ENCODE measurements at regions of chr3 and their contacts with region 1.

Region 1: GRCh38 chr3:113163152-113163551 is 48.2 kb upstream of the BOC start:
- DNase-seq: no peak
- H3K4me3 ChIP-seq: no peak overlapping the region
- H3K27ac ChIP-seq: no peak overlapping the region
- H3K4me1 ChIP-seq: peaks cover 0 to 14% of the 10 kb centered on the region in 2 donors
- H3K27me3 ChIP-seq: no peaks in the 10 kb centered on the region
- CTCF ChIP-seq: no peak
- POLR2A ChIP-seq: no peak

Region 2: DNA sequence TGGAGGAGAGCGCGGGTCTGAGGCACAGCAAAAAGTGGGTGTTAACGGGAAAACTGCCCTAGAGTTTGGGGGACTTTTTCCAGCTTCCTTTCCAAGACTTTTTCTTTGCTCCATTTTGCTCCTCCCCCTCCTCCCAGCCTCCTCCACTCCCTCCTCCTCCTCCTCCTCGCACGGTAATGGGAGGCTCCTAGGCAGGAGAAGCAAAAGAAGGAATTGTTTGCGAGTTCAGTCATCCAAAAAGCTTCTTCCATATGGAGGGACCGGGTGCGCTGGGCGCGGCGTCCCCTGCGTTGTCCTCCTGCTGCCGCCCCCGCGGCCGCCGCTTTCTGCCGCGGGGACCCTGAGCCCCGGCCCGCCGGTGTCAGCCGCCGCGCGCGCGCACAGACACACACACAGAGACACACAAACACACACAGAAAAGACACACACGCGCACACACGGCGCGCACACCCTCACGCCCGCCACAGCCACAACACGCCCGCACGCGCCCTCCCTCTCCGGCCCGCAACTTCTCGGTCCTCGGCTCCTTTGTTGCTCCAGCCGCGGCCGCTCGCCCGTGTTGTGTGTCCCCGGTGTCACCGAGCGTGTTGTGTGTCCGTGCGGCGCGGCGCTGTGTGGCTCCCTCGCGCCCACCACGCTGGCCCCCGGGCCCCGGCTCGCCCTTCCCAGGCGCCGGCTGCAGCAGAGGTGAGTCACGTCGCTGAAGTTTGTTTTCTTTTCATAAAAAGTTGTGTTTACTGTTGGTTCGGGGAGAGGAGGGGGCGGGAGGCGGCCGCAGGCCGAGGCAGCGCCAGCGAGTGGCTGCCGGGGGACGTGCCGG is 48.4 kb after region 1 on chr3 and contains the start of gene BOC:
- intact Hi-C with region 1: loop called (anchors 1 kb)
- DNase-seq: no peak
- H3K4me3 ChIP-seq: peak within 1 kb of the TSS; percentile 77 to 86 (median 85)
- H3K27ac ChIP-seq: peak within 1 kb of the TSS; percentile 93 to 99
- H3K4me1 ChIP-seq: peaks cover 0 to 3% of the 10 kb centered on the region in 2 donors
- H3K27me3 ChIP-seq: no peaks in the 10 kb centered on the region
- CTCF ChIP-seq: no peak
- POLR2A ChIP-seq: peak; percentile 15
- total RNA-seq, gene BOC: 48.8 to 56.6 (median 55.1) TPM

Region 3: DNA sequence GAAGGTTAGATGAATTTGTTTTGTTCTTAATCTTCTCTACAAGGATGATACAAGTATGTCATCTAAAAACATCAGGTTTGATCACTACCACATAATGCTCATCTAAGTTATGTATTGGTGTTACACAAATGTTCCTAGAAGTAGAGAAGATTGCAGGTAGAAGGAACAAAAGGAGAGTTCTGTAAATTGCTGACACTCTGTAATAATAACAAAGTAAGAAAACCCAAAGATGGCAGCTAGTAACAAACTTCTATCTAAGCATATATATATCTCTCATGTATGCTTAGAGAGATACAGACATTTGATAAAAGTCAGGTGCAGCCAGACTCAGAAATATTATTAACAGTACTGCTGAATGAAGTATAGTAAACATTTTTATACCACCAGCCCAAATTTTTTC is 298.3 kb after region 1 on chr3:
- intact Hi-C with region 1: no loop called
- DNase-seq: no peak
- H3K4me3 ChIP-seq: no peak overlapping the region
- H3K27ac ChIP-seq: no peak overlapping the region
- H3K4me1 ChIP-seq: no peaks in the 10 kb centered on the region
- H3K27me3 ChIP-seq: no peaks in the 10 kb centered on the region
- CTCF ChIP-seq: no peak
- POLR2A ChIP-seq: no peak

Measured in breast epithelium (tissue), 4 donors.